ENCODE measurements at regions of chr4 and their contacts with region 1.

Region 1: DNA sequence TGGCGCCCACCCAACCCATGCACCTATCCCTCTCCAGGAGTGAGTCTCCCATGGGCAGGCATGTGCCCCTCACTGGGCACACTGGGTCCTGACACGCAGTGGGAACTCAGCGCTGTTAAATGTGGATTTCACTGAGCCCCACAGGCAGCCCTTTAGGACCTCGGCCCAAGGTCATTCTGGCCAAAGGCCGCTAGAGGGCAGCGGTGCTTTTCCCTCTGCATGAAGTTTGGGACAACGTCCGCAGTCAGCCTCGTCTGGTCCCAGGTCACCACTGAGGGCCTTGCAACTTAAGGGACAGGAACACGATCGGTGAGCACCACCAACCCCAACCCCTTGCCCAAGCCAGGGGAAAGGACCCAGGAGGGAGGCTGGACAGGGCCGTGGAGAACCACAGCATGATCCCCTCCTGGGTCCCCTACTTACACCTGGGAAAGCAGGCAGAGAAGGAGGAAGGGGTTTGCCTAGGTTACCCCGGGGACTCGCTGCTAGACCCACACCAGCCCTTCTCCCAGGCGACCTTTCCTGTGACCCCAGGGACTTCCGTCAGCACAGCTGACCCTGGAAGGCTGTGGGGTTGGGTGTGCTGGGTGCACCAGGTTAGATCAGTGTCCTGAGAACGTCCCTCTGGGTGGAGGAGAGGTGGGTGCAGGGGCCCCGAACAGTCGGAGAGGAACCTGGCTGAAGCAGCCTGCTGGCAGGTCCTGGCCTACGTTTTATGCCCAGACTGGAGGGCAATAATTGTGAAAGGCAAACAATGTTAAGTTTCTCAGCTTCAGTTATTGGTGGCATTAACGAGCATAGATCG is 24.0 kb downstream of the CYTL1 start:
- DNase-seq: peak; percentile 75 to 82
- H3K4me3 ChIP-seq: no peak overlapping the region
- H3K4me3 Mint-ChIP-seq: peak overlapping the region; percentile 30
- H3K27ac Mint-ChIP-seq: no peak overlapping the region
- H3K4me1 ChIP-seq: 0 out of 2 replicates have a peak, but pooled peaks cover 6% of the 10 kb centered on the region
- H3K4me1 Mint-ChIP-seq: no peaks in the 10 kb centered on the region
- H3K27me3 ChIP-seq: no peaks in the 10 kb centered on the region
- H3K27me3 Mint-ChIP-seq: peaks cover 3% of the 10 kb centered on the region
- CTCF ChIP-seq: peak; percentile 84 to 90

Region 2: DNA sequence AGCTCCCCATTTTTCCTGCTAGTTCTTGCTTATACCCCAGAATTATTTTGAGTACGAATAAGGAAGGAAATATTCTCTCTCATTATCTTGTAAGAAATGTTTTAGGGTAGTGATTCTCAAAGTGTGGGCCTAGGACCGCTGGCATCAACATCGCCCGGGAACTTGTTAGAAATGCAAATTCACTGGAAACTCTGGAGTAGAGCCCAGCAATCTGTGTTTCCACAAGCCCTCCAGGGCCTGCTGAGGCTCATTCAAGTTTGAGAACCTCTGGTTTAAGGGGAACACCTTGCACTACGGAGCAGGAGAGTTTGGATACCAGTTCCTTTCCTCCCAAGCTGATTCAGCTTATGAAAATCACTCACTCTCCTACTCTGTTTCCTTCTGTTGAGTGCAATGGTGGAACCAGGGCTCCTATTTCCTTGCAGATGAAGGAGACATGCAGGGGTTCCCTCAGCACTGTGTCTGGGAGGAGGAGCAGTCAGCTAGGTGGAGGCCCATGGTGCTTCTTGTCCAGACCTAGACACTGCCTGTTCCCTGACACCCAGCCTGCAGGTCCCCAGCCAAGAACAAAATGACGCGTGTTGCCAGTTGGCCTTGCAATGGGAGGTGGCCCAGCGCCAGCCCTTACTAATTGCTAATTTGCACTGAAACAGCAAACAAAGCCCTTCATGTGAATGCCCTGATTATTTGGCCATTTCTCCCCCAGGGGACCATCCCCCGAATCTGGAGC is 44.6 kb before region 1 on chr4:
- CTCF ChIA-PET with region 1: no interaction called
- POLR2A ChIA-PET with region 1: no interaction called
- intact Hi-C with region 1: no loop called
- DNase-seq: no peak
- H3K4me3 ChIP-seq: no peak overlapping the region
- H3K4me3 Mint-ChIP-seq: no peak overlapping the region
- H3K27ac Mint-ChIP-seq: no peak overlapping the region
- H3K4me1 ChIP-seq: no peaks in the 10 kb centered on the region
- H3K4me1 Mint-ChIP-seq: no peaks in the 10 kb centered on the region
- H3K27me3 ChIP-seq: no peaks in the 10 kb centered on the region
- H3K27me3 Mint-ChIP-seq: peaks cover 9% of the 10 kb centered on the region
- CTCF ChIP-seq: no peak

Region 3: GRCh38 chr4:5101571-5101970 is 106.3 kb after region 1 on chr4:
- CTCF ChIA-PET with region 1: no interaction called
- POLR2A ChIA-PET with region 1: no interaction called
- intact Hi-C with region 1: no loop called
- DNase-seq: no peak
- H3K4me3 ChIP-seq: no peak overlapping the region
- H3K4me3 Mint-ChIP-seq: no peak overlapping the region
- H3K27ac Mint-ChIP-seq: no peak overlapping the region
- H3K4me1 ChIP-seq: no peaks in the 10 kb centered on the region
- H3K4me1 Mint-ChIP-seq: no peaks in the 10 kb centered on the region
- H3K27me3 ChIP-seq: no peaks in the 10 kb centered on the region
- H3K27me3 Mint-ChIP-seq: no peaks in the 10 kb centered on the region
- CTCF ChIP-seq: no peak

Region 4: DNA sequence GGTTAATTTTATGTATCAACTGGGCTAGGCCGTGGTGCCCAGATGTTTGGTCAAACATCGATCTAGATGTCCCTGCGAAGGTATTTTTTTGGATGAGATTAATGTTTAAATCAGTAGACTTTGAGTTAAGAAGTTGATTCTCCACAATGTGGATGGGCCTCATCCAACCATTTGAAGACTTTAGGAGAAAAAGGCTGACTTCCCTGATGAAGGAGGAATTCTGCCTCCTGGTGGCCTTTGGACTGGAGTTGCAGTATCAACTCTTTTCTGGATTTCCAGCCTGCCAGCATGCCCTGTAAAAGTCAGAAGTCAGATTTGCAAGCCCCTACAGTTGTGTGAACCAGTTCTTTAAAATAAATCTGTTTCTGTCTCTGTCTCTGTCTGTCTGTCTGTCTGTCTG is 147.4 kb after region 1 on chr4:
- CTCF ChIA-PET with region 1: no interaction called
- POLR2A ChIA-PET with region 1: no interaction called
- intact Hi-C with region 1: loop called (anchors 2 kb)
- DNase-seq: peak in 1 of 2 experiments; percentile 39
- H3K4me3 ChIP-seq: no peak overlapping the region
- H3K4me3 Mint-ChIP-seq: no peak overlapping the region
- H3K27ac Mint-ChIP-seq: no peak overlapping the region
- H3K4me1 ChIP-seq: no peaks in the 10 kb centered on the region
- H3K4me1 Mint-ChIP-seq: peaks cover 5% of the 10 kb centered on the region
- H3K27me3 ChIP-seq: no peaks in the 10 kb centered on the region
- H3K27me3 Mint-ChIP-seq: no peaks in the 10 kb centered on the region
- CTCF ChIP-seq: peak; percentile 30 to 53

Region 5: GRCh38 chr4:5378002-5378401 is 382.7 kb after region 1 on chr4:
- CTCF ChIA-PET with region 1: no interaction called
- POLR2A ChIA-PET with region 1: no interaction called
- intact Hi-C with region 1: loop called (anchors 10 kb)
- DNase-seq: no peak
- H3K4me3 ChIP-seq: no peak overlapping the region
- H3K4me3 Mint-ChIP-seq: no peak overlapping the region
- H3K27ac Mint-ChIP-seq: no peak overlapping the region
- H3K4me1 ChIP-seq: no peaks in the 10 kb centered on the region
- H3K4me1 Mint-ChIP-seq: no peaks in the 10 kb centered on the region
- H3K27me3 ChIP-seq: no peaks in the 10 kb centered on the region
- H3K27me3 Mint-ChIP-seq: no peaks in the 10 kb centered on the region
- CTCF ChIP-seq: no peak

Region 6: GRCh38 chr4:5460116-5460801 is 465.0 kb after region 1 on chr4:
- CTCF ChIA-PET with region 1: no interaction called
- POLR2A ChIA-PET with region 1: no interaction called
- intact Hi-C with region 1: loop called (anchors 1 kb)
- DNase-seq: peak in 1 of 2 experiments; percentile 30
- H3K4me3 ChIP-seq: no peak overlapping the region
- H3K4me3 Mint-ChIP-seq: no peak overlapping the region
- H3K27ac Mint-ChIP-seq: no peak overlapping the region
- H3K4me1 ChIP-seq: no peaks in the 10 kb centered on the region
- H3K4me1 Mint-ChIP-seq: no peaks in the 10 kb centered on the region
- H3K27me3 ChIP-seq: no peaks in the 10 kb centered on the region
- H3K27me3 Mint-ChIP-seq: peaks cover 5% of the 10 kb centered on the region
- CTCF ChIP-seq: peak in 1 of 2 experiments; percentile 41

Region 7: DNA sequence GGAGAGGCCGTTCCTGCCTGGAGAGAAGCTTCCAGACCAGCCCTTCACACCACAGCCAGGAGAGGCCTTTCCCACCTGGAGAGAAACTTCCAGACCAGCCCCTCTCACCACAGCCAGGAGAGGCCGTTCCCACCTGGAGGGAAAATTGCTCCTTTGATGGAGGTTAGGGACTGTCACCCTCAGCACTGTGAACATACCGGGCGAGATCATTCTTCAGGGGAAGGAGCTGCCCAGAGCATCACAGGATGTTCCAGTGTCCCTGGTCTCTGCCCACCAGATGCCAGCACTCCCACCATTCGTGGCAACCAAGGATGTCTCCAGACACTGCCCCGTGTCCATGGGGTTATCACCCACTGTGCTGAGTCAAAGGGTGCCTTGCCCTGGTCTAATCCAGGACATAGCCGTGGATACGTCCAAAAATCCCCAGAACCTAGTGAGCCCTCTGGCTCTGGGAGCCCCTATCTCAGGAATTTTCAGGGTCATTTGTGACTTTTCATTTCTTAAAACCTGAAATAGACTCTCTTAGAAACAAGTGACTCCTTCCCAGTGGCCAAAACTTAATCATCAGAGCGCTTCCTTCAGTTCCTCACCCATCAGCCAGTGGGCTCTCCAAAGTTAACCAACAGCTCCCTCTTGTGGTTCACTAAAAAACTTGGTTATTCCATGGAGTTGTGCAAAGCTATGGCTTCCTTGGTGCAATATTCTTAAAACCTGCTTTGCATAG is 817.4 kb after region 1 on chr4:
- CTCF ChIA-PET with region 1: no interaction called
- POLR2A ChIA-PET with region 1: no interaction called
- intact Hi-C with region 1: loop called (anchors 1 kb)
- DNase-seq: peak in 1 of 2 experiments; percentile 60
- H3K4me3 ChIP-seq: no peak overlapping the region
- H3K4me3 Mint-ChIP-seq: no peak overlapping the region
- H3K27ac Mint-ChIP-seq: no peak overlapping the region
- H3K4me1 ChIP-seq: no peaks in the 10 kb centered on the region
- H3K4me1 Mint-ChIP-seq: no peaks in the 10 kb centered on the region
- H3K27me3 ChIP-seq: no peaks in the 10 kb centered on the region; the same call in 1 of the 2 replicates
- H3K27me3 Mint-ChIP-seq: peaks cover 5% of the 10 kb centered on the region
- CTCF ChIP-seq: peak; percentile 55 to 60

Measured in Caco-2 (cell line).